ENCODE measurements at regions of chr1 and their contacts with region 1.

Region 1: DNA sequence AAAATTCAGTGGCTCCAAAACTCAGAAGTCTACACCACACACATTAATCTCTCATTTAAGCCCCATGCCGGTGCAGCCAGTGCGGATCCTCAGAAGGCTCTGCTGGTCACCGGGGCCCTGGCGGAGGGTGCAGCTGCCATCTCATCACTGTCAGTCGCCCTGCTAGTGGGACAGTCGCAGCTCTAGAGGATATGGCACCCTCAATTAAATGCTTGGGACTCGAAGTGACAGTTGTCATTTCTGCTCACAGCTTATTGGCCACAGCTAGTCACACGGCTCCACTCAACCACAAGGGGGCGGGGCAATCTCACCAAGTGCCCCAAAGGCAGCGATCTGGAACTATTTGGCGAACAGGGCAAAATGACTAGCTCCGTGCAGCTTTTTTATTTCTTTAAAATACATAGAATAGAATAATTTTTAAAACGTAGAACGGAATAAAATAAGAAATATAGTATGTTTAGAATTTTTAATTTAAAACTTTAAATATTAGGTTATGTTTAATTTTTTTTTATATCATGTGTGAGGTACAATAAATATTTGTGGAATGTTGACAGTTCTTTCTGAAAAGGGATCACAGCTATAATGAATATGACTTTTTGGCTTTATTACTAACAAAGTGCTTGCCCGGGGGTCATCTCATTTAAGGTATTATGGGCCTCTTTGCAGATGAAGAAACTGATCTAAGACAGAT is 8.0 kb upstream of the MAN1C1 start:
- DNase-seq: peak; percentile 91
- H3K4me3 Mint-ChIP-seq: no peak overlapping the region
- H3K27ac Mint-ChIP-seq: no peak overlapping the region
- H3K4me1 Mint-ChIP-seq: peaks cover 8% of the 10 kb centered on the region
- H3K27me3 Mint-ChIP-seq: peaks cover 69% of the 10 kb centered on the region

Region 2: GRCh38 chr1:25503551-25504426 is 104.8 kb before region 1 on chr1:
- CTCF ChIA-PET with region 1: no interaction called
- POLR2A ChIA-PET with region 1: no interaction called
- DNase-seq: peak; percentile 66
- H3K4me3 Mint-ChIP-seq: no peak overlapping the region
- H3K27ac Mint-ChIP-seq: no peak overlapping the region
- H3K4me1 Mint-ChIP-seq: peaks cover 12% of the 10 kb centered on the region
- H3K27me3 Mint-ChIP-seq: peaks cover 5% of the 10 kb centered on the region

Region 3: DNA sequence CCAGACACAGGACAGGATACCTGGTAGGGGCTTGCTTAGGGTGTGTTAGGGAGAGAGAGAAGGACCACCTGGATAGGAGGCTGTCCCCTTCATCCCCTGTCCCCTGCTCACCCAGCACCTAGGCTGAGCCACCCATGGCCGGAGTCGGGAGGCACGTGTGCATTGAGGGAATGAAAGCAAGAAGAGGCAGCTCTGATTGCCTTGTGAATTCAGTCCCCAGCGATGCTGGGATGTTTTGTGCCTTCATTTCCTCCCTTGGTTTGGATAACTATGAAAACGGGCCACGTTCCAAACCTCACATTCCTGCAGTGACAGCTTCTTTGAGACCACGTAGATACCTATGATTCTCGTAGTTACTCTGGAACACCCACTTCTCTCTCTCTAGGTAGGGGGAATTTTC is 75.1 kb after region 1 on chr1:
- CTCF ChIA-PET with region 1: no interaction called
- POLR2A ChIA-PET with region 1: no interaction called
- DNase-seq: no peak
- H3K4me3 Mint-ChIP-seq: no peak overlapping the region
- H3K27ac Mint-ChIP-seq: no peak overlapping the region
- H3K4me1 Mint-ChIP-seq: peaks cover 3% of the 10 kb centered on the region
- H3K27me3 Mint-ChIP-seq: peaks cover 61% of the 10 kb centered on the region

Region 4: GRCh38 chr1:25796811-25797458 is 188.3 kb after region 1 on chr1:
- CTCF ChIA-PET with region 1: interaction called, 52 read pairs
- POLR2A ChIA-PET with region 1: no interaction called
- DNase-seq: peak; percentile 84
- H3K4me3 Mint-ChIP-seq: peak overlapping the region; percentile 57
- H3K27ac Mint-ChIP-seq: peak overlapping the region; percentile 3
- H3K4me1 Mint-ChIP-seq: peaks cover 37% of the 10 kb centered on the region
- H3K27me3 Mint-ChIP-seq: peaks cover 13% of the 10 kb centered on the region

Region 5: DNA sequence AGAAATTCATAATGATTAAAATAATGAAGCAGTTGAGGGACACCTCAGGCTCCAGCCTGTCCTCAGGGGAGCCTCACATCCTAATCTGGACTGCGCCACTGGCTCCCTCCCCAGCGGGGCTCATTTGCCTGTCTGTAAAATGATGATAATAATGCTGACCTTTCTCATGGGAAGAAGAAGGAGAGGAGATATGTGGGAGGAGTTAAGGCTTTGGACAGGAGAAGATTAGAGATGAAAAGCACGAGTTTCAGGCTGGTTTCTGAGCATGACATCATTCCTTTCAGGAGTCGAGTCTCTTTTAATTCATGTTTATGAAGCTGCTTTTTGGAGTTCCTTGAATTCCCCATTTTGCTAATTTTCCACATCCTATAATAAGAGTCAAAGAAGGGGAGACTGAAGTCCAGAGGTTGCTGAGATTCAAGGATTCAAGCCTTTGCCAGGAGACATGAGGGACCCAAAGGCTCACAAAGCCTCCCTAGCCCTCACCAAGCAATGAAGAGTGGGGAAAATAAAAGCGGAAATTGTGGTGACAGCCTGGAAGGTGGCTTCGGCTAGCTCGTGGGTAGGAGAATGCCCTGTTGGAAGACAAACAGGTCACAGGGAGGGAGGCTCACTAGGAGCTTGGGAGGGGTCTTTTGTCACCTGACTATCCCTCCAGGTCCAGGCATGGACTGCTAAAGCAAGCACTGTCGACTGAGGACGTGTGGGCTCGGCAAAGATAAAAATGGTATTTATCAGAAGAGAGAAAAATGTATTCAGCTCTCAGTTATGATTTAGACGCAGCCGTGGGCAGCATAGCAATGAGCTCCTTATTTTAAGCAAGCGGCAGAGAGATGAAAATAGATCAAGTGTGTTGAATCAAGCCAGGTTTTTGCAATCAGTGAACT is 325.1 kb after region 1 on chr1:
- CTCF ChIA-PET with region 1: no interaction called
- POLR2A ChIA-PET with region 1: no interaction called
- DNase-seq: no peak
- H3K4me3 Mint-ChIP-seq: no peak overlapping the region
- H3K27ac Mint-ChIP-seq: no peak overlapping the region
- H3K4me1 Mint-ChIP-seq: peaks cover 2% of the 10 kb centered on the region
- H3K27me3 Mint-ChIP-seq: peaks cover 17% of the 10 kb centered on the region